Transverse colon (tissue), 4 donors: ENCODE measurements at regions of chr14 and their contacts with region 1.

Region 1: GRCh38 chr14:91317381-91318308 is 73.1 kb upstream of the GPR68 start:
- DNase-seq: peak; percentile 87
- H3K4me3 ChIP-seq: no peak overlapping the region
- H3K27ac ChIP-seq: peak overlapping the region; percentile 66 to 76 (median 70)
- H3K4me1 ChIP-seq: peaks cover 15 to 22% (median 16%) of the 10 kb centered on the region in 4 donors
- H3K27me3 ChIP-seq: no peaks in the 10 kb centered on the region
- CTCF ChIP-seq: peak; percentile 9 to 58 (median 35)
- EP300 ChIP-seq: no peak
- POLR2A ChIP-seq: no peak

Region 2: GRCh38 chr14:90426663-90427062 is 891.0 kb before region 1 on chr14:
- in situ Hi-C with region 1: no loop called
- intact Hi-C with region 1: no loop called
- DNase-seq: peak; percentile 47
- H3K4me3 ChIP-seq: no peak overlapping the region
- H3K27ac ChIP-seq: no peak overlapping the region
- H3K4me1 ChIP-seq: peaks cover 0 to 10% (median 2%) of the 10 kb centered on the region in 4 donors
- H3K27me3 ChIP-seq: no peaks in the 10 kb centered on the region
- CTCF ChIP-seq: no peak
- EP300 ChIP-seq: no peak
- POLR2A ChIP-seq: no peak

Region 3: DNA sequence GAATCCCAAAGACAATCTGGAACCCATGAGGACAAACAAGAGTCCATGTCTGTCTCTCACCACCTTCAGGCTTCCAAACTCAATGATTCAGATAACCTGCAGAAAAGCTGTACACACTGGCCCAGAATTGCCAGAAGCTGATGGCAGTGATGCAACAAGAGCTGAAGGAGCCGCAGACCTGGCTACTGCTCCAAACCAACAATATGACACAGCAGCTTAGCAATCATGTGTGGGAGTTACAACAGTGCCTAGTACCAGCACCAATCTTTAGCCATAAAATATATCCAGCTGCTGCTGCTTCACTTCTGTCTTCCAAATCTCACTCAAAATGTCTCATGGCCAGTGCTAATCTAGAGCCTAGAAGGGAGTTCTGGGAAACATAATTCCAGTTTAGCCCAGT is 279.2 kb before region 1 on chr14:
- in situ Hi-C with region 1: no loop called
- intact Hi-C with region 1: no loop called
- DNase-seq: no peak
- H3K4me3 ChIP-seq: no peak overlapping the region
- H3K27ac ChIP-seq: no peak overlapping the region
- H3K4me1 ChIP-seq: peaks cover 0 to 25% (median 15%) of the 10 kb centered on the region in 4 donors
- H3K27me3 ChIP-seq: no peaks in the 10 kb centered on the region
- CTCF ChIP-seq: no peak
- EP300 ChIP-seq: no peak
- POLR2A ChIP-seq: no peak

Region 4: DNA sequence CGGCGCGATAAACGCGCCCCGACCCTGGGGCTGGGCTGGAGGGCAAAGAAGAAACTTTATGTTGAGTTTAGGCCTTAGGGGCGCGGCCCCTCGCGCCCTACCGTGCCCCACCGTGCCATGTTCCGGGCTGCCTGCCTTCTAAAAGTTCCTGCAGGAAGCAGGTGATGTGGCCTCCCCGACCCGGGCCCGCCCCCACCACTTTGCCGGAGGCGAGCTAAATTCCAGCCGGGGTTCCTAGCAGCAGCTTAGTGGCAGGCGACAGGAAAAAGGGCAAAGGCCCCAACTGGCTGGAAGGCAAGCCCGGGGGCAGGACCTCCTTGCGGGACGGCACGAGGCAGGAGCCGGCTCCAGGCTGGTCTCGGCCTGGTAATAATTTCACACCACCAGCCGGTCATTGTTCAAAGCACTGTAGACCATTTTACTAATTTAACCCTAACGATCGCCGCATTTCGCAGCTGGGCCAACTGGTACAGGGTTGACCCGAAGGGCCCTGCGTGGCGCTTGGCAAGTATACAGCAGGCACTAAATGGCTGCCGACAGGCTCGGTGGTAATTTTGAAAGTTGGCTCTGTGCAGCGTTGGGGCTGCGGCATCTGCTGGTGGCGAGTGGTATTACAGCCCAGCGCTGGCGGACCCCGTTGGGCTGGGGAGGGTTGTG is 100.9 kb after region 1 on chr14:
- in situ Hi-C with region 1: loop called (anchors 5 to 25 kb)
- intact Hi-C with region 1: loop called (anchors 5 kb)
- DNase-seq: peak; percentile 81
- H3K4me3 ChIP-seq: peak overlapping the region; percentile 11 to 85 (median 76)
- H3K27ac ChIP-seq: peak overlapping the region; percentile 71 to 89 (median 83)
- H3K4me1 ChIP-seq: peaks cover 7 to 44% (median 28%) of the 10 kb centered on the region in 4 donors
- H3K27me3 ChIP-seq: no peaks in the 10 kb centered on the region
- CTCF ChIP-seq: peak; percentile 98 to 100 (median 99)
- EP300 ChIP-seq: no peak
- POLR2A ChIP-seq: no peak